Right ventricle myocardium superior (tissue), 1 donor: ENCODE measurements at regions of chr11 and their contacts with region 1.

Region 1: GRCh38 chr11:120172054-120172911 is 34.4 kb upstream of the TRIM29 start:
- DNase-seq: peak; percentile 80
- ATAC-seq: peak; percentile 71

Region 2: DNA sequence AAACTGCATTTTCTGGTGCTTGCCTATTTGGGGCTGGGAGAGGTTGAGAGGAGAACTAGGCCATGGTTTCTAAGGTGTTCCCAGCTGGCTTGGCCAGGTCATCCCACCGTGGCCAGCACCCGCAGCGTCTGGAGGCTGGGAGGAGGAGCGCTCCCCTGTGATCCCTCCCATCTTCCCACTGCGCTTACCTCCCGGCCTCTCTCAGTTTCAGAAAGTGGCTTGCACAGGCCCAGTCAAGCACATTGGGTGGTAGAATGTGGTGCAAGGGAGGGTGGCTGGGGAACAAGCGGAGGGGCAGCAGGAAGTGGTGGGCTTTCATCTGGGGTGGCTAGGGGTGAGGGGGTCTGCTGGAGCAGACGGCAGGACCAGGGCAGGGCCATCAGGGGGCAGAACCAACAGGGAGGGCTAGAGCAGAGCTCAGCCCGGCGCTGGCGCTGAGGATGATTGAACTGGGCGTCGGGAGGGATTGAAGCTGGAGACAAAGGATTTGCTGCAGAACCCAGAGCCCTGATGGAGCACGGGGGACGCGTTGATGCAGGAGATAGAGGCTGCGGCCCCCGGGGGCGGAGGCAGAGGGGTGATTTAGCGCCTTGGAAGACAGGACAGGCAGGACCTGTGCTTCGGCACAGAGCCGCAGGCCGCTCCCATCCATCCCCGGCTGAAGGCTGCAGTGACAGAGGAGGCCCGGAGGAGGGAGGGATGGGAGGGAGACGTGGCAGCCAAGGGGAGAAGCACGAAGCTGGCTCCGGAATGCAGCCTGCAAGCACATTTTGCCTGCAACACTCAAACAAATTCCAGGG is 110.3 kb before region 1 on chr11:
- intact Hi-C with region 1: no loop called
- DNase-seq: no peak
- ATAC-seq: no peak

Region 3: GRCh38 chr11:120229451-120230424 is 57.5 kb after region 1 on chr11:
- intact Hi-C with region 1: loop called (anchors 2 kb)
- DNase-seq: no peak
- ATAC-seq: no peak